Activated CD4-positive, alpha-beta memory T cell treated with anti-CD3 and anti-CD28 coated beads for 36 hours (primary cell): ENCODE measurements at regions of chr9 and their contacts with region 1.

Region 1: DNA sequence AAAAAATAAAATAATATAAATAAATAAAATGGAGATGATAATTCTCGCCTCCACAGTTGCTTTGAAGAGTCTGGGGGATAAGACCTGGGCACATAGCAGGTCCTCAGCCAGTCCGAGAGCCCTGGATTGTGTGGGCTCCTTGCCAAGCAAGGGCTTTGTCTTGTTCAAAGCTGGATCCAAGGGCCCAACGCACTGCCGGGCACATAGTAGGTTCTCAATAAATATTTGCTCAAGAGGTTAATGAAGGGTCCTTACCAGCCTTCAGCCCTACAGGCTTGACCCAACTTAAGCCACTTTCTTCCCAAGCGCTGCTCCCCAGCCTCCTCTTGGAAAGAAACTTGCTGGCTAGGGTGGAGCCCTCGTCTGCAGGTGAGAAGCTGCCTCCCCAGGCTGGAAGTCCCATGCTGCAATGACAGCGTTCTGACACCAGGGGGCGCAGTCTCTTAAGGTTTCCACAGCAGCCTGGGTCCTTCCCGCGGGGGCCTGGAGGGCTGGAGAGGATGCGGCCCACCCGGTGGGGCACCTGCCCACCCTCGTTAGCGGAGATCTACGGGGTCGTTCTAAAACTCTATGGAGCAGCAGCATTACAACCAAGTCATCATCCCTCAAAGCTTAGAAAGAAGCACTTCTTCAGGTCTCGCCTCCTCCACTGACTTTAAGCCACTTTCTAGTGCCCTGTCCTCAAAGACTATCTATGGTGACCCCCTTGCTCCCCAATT is 115.2 kb downstream of the LHX2 start:
- DNase-seq: peak; percentile 87
- H3K4me3 Mint-ChIP-seq: no peak overlapping the region
- H3K27ac Mint-ChIP-seq: no peak overlapping the region
- H3K4me1 Mint-ChIP-seq: peaks cover 4% of the 10 kb centered on the region
- H3K27me3 Mint-ChIP-seq: no peaks in the 10 kb centered on the region

Region 2: GRCh38 chr9:124202447-124202971 is 75.8 kb after region 1 on chr9:
- CTCF ChIA-PET with region 1: interaction called, 7 read pairs
- POLR2A ChIA-PET with region 1: no interaction called
- intact Hi-C with region 1: loop called (anchors 5 kb)
- DNase-seq: peak; percentile 96
- H3K4me3 Mint-ChIP-seq: peak overlapping the region; percentile 31
- H3K27ac Mint-ChIP-seq: peak overlapping the region; percentile 87
- H3K4me1 Mint-ChIP-seq: peaks cover 47% of the 10 kb centered on the region
- H3K27me3 Mint-ChIP-seq: peaks cover 4% of the 10 kb centered on the region

Region 3: GRCh38 chr9:124256517-124257138 is 129.9 kb after region 1 on chr9:
- CTCF ChIA-PET with region 1: interaction called, 14 read pairs
- POLR2A ChIA-PET with region 1: no interaction called
- intact Hi-C with region 1: loop called (anchors 1 kb)
- DNase-seq: no peak
- H3K4me3 Mint-ChIP-seq: peak overlapping the region; percentile 80
- H3K27ac Mint-ChIP-seq: no peak overlapping the region
- H3K4me1 Mint-ChIP-seq: peaks cover 71% of the 10 kb centered on the region
- H3K27me3 Mint-ChIP-seq: peaks cover 15% of the 10 kb centered on the region

Region 4: GRCh38 chr9:124302921-124303320 is 176.2 kb after region 1 on chr9:
- CTCF ChIA-PET with region 1: interaction called, 11 read pairs
- POLR2A ChIA-PET with region 1: no interaction called
- intact Hi-C with region 1: no loop called
- DNase-seq: no peak
- H3K4me3 Mint-ChIP-seq: no peak overlapping the region
- H3K27ac Mint-ChIP-seq: no peak overlapping the region
- H3K4me1 Mint-ChIP-seq: peaks cover 13% of the 10 kb centered on the region
- H3K27me3 Mint-ChIP-seq: no peaks in the 10 kb centered on the region

Region 5: GRCh38 chr9:124392871-124393460 is 266.2 kb after region 1 on chr9:
- CTCF ChIA-PET with region 1: interaction called, 30 read pairs
- POLR2A ChIA-PET with region 1: no interaction called
- intact Hi-C with region 1: loop called (anchors 5 kb)
- DNase-seq: peak; percentile 34
- H3K4me3 Mint-ChIP-seq: no peak overlapping the region
- H3K27ac Mint-ChIP-seq: no peak overlapping the region
- H3K4me1 Mint-ChIP-seq: peaks cover 66% of the 10 kb centered on the region
- H3K27me3 Mint-ChIP-seq: no peaks in the 10 kb centered on the region

Region 6: DNA sequence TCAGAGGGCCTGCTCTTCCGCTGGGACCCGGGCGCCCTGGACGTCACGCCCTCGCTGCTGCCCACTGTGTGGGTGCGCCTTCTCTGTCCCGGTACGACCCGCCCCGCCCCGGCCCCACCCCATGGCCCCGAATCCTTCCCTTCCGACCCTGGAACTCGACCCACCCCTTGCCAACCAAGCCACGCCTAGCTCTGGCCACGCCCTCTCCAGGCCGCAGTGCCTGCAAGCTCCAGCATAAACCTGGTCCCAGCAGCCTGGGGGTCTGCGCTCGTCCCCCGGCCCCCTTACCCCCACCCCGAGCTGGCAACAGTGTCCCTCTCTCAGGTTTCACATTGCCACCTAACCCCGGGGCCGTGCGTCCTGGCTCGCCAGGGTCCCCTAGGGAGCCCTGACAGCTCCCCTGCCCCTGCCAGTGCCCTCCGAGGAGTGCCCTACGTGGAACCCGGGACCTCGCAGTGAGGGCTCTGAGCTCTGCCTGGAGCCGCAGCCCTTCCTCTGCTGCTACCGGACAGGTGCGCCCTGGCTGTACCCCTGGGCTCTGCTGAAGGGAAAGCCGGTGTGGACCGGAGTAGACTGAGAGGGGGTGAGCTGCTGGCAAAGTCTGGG is 327.0 kb after region 1 on chr9:
- CTCF ChIA-PET with region 1: no interaction called
- POLR2A ChIA-PET with region 1: no interaction called
- intact Hi-C with region 1: no loop called
- DNase-seq: no peak
- H3K4me3 Mint-ChIP-seq: no peak overlapping the region
- H3K27ac Mint-ChIP-seq: no peak overlapping the region
- H3K4me1 Mint-ChIP-seq: no peaks in the 10 kb centered on the region
- H3K27me3 Mint-ChIP-seq: peaks cover 31% of the 10 kb centered on the region